ENCODE measurements at regions of chr16 and their contacts with region 1.

Region 1: GRCh38 chr16:8868416-8869211 is at the start of gene CARHSP1:
- DNase-seq: peak; percentile 81 to 86 (median 83)
- H3K4me3 ChIP-seq: peak within 1 kb of the TSS; percentile 83 to 90 (median 84)
- H3K4me3 Mint-ChIP-seq: peak within 1 kb of the TSS; percentile 93 to 96
- H3K27ac ChIP-seq: peak within 1 kb of the TSS; percentile 47 to 70
- H3K27ac Mint-ChIP-seq: peak within 1 kb of the TSS; percentile 67 to 97 (median 84)
- H3K4me1 ChIP-seq: peaks cover 38 to 58% of the 10 kb centered on the region in 2 donors
- H3K4me1 Mint-ChIP-seq: peaks cover 54% of the 10 kb centered on the region
- H3K27me3 ChIP-seq: no peaks in the 10 kb centered on the region
- H3K27me3 Mint-ChIP-seq: peaks cover 1 to 3% (median 2%) of the 10 kb centered on the region in 3 donors
- CTCF ChIP-seq: no peak
- polyA plus RNA-seq, gene CARHSP1: 32.0 to 60.3 (median 52.0) TPM

Region 2: DNA sequence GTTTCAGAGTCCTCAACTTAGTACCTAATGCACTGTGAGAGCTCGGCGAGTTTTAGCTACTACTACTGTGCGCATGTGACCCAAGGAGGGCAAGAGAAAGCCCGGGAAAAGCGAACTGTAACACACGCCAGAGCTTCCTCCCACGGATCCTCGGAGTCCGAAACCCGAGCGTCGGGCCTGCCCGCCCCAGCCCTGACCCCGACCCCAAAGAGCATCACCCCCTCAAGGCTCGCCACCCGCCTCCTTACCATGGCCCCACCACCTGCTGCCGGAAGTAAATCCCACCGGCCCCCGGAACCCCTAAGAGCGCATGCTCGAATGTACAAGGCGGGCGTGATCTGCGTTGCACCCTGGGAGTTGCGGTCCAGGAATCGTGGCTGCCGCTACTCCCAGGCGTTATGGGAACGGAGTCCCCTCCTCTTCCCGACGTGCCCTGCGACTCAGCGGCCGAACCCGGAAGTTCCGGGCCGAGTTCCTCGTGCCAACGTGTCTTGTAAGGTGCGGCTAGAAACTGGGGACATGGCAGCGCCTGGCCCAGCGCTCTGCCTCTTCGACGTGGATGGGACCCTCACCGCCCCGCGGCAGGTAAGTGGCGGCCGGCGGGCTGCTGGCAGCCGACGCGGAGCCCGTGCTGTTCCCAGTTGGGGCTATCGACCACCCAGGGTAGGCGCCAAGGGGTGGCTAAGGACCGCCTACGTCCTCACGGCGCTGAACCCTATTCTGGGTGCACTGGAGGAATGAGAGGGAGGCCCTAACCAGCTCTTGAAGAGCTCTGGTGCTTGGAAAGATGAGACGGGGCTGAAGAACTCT is 71.0 kb before region 1 on chr16 and contains the starts of genes PMM2 and TMEM186:
- intact Hi-C with region 1: loop called in 1 of 2 experiments (anchors 5 kb)
- DNase-seq: peak; percentile 93 to 96 (median 94)
- H3K4me3 ChIP-seq: peak within 1 kb of the TSS; percentile 65 to 91 (median 71)
- H3K4me3 Mint-ChIP-seq: peak within 1 kb of the TSS; percentile 96 to 98
- H3K27ac ChIP-seq: peak within 1 kb of the TSS; percentile 21 to 89
- H3K27ac Mint-ChIP-seq: peak within 1 kb of the TSS; percentile 81 to 98 (median 90)
- H3K4me1 ChIP-seq: peaks cover 29 to 37% of the 10 kb centered on the region in 2 donors
- H3K4me1 Mint-ChIP-seq: peaks cover 31% of the 10 kb centered on the region
- H3K27me3 ChIP-seq: no peaks in the 10 kb centered on the region
- H3K27me3 Mint-ChIP-seq: peaks cover 0 to 3% (median 0%) of the 10 kb centered on the region in 3 donors
- CTCF ChIP-seq: no peak
- polyA plus RNA-seq, gene PMM2: 15.2 to 22.9 (median 17.8) TPM
- polyA plus RNA-seq, gene TMEM186: 3.8 to 4.5 (median 4.4) TPM